IMR-90 (cell line): ENCODE measurements at regions of chr1 and their contacts with region 1.

Region 1: GRCh38 chr1:173867753-173868265 is at the start of gene GAS5:
- DNase-seq: peak; percentile 100
- ATAC-seq: peak; percentile 92
- H3K4me3 ChIP-seq: peak within 1 kb of the TSS; percentile 70
- H3K27ac ChIP-seq: peak within 1 kb of the TSS; percentile 80
- H3K4me1 ChIP-seq: no peaks in the 10 kb centered on the region; the same call in 1 of the 2 replicates
- H3K27me3 ChIP-seq: no peaks in the 10 kb centered on the region
- CTCF ChIP-seq: no peak
- POLR2A ChIP-seq: peak; percentile 100
- RAD21 ChIP-seq: no peak
- total RNA-seq, gene GAS5: 380 and 450 TPM in 2 replicates

Region 2: DNA sequence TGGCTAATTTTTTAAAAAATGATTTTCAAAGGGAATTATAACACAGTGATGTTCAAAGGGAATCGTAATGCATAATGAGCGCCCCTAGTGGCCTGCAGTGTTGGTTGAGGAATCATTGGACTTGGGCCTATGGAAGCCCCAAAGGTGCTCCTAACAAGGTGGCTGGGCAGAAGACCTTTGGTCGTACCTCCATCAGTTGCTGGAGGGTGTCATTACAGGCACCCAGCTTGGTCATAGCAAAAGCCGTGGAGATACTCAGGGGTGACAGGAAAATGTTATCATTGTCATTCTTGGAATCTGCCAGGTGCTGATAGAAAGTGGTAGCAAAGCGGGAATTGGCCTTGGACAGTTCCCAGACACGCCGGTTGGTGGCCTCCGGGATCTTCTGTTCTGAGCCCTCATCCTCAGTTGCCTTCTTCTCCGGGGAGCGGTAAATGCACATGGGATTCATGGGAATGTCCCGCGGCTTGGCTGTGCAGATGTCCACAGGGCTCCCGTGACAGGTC is 46.6 kb after region 1 on chr1:
- CTCF ChIA-PET with region 1: no interaction called
- POLR2A ChIA-PET with region 1: no interaction called
- dilution Hi-C with region 1: no loop called
- in situ Hi-C with region 1: no loop called
- intact Hi-C with region 1: no loop called
- DNase-seq: peak; percentile 18
- ATAC-seq: no peak
- H3K4me3 ChIP-seq: no peak overlapping the region
- H3K27ac ChIP-seq: no peak overlapping the region
- H3K4me1 ChIP-seq: no peaks in the 10 kb centered on the region
- H3K27me3 ChIP-seq: no peaks in the 10 kb centered on the region
- CTCF ChIP-seq: peak; percentile 43
- POLR2A ChIP-seq: no peak
- RAD21 ChIP-seq: peak; percentile 23; the same call in 1 of the 2 replicates

Region 3: GRCh38 chr1:173954179-173954578 is 86.4 kb after region 1 on chr1:
- CTCF ChIA-PET with region 1: no interaction called
- POLR2A ChIA-PET with region 1: interaction called, 15 read pairs
- dilution Hi-C with region 1: no loop called
- in situ Hi-C with region 1: no loop called
- intact Hi-C with region 1: no loop called
- DNase-seq: peak; percentile 23
- ATAC-seq: peak; percentile 29; the same call in 1 of the 2 replicates
- H3K4me3 ChIP-seq: no peak overlapping the region
- H3K27ac ChIP-seq: no peak overlapping the region
- H3K4me1 ChIP-seq: no peaks in the 10 kb centered on the region
- H3K27me3 ChIP-seq: no peaks in the 10 kb centered on the region
- CTCF ChIP-seq: no peak
- POLR2A ChIP-seq: no peak
- RAD21 ChIP-seq: no peak

Region 4: DNA sequence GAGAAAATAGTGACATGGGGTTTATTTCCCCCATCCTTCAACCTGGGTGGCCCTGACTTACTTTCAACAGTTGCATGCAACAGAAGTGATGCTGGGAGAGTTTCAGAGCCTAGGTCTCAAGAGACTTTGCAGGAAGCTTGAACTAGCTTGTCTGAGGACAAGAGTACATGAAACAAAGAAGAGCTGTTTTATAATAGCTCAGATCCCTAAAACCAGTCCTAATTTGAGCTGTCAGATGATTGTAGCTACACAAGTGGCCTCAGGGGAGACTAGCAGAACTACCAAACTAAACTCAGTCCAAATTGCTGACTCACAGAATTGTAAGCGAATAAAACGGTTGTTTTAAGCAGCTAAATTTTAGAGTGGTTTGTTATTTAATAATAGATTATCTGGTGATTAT is 137.2 kb after region 1 on chr1:
- CTCF ChIA-PET with region 1: no interaction called
- POLR2A ChIA-PET with region 1: no interaction called
- dilution Hi-C with region 1: no loop called
- in situ Hi-C with region 1: no loop called
- intact Hi-C with region 1: no loop called
- DNase-seq: peak; percentile 34
- ATAC-seq: peak; percentile 47
- H3K4me3 ChIP-seq: no peak overlapping the region
- H3K27ac ChIP-seq: no peak overlapping the region
- H3K4me1 ChIP-seq: peaks cover 17% of the 10 kb centered on the region
- H3K27me3 ChIP-seq: no peaks in the 10 kb centered on the region
- CTCF ChIP-seq: no peak
- POLR2A ChIP-seq: no peak
- RAD21 ChIP-seq: no peak

Region 5: DNA sequence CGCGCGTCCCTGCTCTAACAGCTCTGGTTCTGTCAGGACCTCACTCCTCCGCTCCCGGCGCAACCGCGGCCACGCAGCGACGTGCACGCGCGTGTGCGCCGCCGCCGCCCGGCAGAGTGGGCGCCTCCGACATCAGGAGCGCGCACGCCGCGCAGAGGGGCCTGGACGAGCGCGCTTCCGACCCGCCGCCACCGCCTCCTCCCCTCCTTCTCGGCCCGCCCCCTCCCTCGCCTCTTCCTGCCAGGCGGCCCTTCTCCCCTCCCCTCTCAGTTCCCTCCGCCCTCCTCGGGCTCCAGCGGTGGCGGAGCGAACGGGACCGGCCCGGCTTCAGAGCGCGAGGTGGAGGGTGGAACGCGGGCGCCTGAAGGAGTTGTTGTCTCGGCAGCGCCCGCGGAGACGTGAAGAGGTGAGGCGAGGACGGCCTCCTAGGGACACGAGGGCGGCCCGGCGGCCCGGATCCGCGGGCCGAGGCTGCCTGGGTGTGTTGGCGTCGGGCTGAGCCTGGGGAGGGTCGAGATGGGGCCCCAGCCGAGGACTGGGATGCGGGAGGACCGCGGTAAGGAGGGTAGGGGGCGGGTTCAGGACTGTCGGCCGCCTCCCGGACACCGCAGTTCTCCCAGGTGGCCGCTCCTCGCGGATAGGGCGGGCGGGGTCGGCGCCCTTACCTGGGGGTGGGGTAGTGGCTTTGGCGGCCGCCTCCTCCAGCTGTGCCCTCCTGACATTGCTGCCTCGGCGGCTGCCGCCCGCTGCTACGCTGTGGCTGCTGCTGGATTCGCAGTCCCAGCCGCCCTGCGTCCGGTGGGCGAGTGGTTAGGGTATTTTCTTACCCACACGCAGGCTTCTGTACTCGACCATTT is 291.7 kb after region 1 on chr1 and contains the start of gene RABGAP1L:
- CTCF ChIA-PET with region 1: no interaction called
- POLR2A ChIA-PET with region 1: no interaction called
- dilution Hi-C with region 1: no loop called
- in situ Hi-C with region 1: no loop called
- intact Hi-C with region 1: loop called (anchors 1 kb)
- DNase-seq: peak; percentile 92
- ATAC-seq: peak; percentile 97
- H3K4me3 ChIP-seq: peak within 1 kb of the TSS; percentile 72
- H3K27ac ChIP-seq: peak within 1 kb of the TSS; percentile 35; the same call in 1 of the 2 replicates
- H3K4me1 ChIP-seq: no peaks in the 10 kb centered on the region
- H3K27me3 ChIP-seq: no peaks in the 10 kb centered on the region; the same call in 1 of the 2 replicates
- CTCF ChIP-seq: no peak
- POLR2A ChIP-seq: peak; percentile 68
- RAD21 ChIP-seq: no peak
- total RNA-seq, gene RABGAP1L: 26.7 and 35.0 TPM in 2 replicates